ENCODE measurements at regions of chr3 and their contacts with region 1.

Region 1: GRCh38 chr3:184250167-184250828 is 826 bp downstream of the EEF1AKMT4 start:
- DNase-seq: peak; percentile 83
- ATAC-seq: peak; percentile 65
- H3K4me3 ChIP-seq: peak overlapping the region; percentile 97
- H3K27ac ChIP-seq: no peak overlapping the region; the same call in 1 of the 2 replicates
- H3K4me1 ChIP-seq: no peaks in the 10 kb centered on the region; the same call in 1 of the 2 replicates
- H3K27me3 ChIP-seq: no peaks in the 10 kb centered on the region
- CTCF ChIP-seq: peak; percentile 89
- POLR2A ChIP-seq: no peak
- RAD21 ChIP-seq: peak; percentile 74

Region 2: GRCh38 chr3:183455089-183455488 is 795.2 kb before region 1 on chr3:
- CTCF ChIA-PET with region 1: no interaction called
- POLR2A ChIA-PET with region 1: no interaction called
- dilution Hi-C with region 1: no loop called
- in situ Hi-C with region 1: loop called (anchors 25 kb)
- intact Hi-C with region 1: no loop called
- DNase-seq: peak; percentile 57
- ATAC-seq: peak; percentile 60; the same call in 1 of the 2 replicates
- H3K4me3 ChIP-seq: no peak overlapping the region
- H3K27ac ChIP-seq: no peak overlapping the region
- H3K4me1 ChIP-seq: no peaks in the 10 kb centered on the region
- H3K27me3 ChIP-seq: no peaks in the 10 kb centered on the region
- CTCF ChIP-seq: no peak
- POLR2A ChIP-seq: no peak
- RAD21 ChIP-seq: no peak

Region 3: DNA sequence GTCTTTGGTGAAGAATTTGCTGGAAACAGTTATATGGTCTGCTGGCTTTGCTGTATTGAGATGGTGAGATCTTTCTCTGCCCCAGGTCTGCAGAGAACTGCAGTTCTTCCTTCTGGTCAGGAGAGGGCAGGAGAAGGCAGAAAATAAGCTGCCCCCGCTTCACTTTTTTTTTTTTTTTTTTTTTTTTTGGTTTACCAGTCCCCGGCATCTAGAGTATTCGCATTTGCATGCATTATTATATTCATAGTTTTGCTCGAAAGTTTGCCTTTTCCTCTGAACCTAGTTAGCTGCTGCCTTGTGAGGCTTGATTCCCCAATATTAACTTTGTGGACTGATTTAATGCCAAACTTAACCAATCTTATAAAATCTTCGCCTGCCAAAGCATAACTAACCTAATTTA is 355.0 kb before region 1 on chr3:
- CTCF ChIA-PET with region 1: interaction called, 3 read pairs
- POLR2A ChIA-PET with region 1: no interaction called
- dilution Hi-C with region 1: no loop called
- in situ Hi-C with region 1: loop called (anchors 10 kb)
- intact Hi-C with region 1: loop called (anchors 1 kb)
- DNase-seq: peak; percentile 55
- ATAC-seq: peak; percentile 94
- H3K4me3 ChIP-seq: no peak overlapping the region
- H3K27ac ChIP-seq: no peak overlapping the region
- H3K4me1 ChIP-seq: no peaks in the 10 kb centered on the region
- H3K27me3 ChIP-seq: peaks cover 32% of the 10 kb centered on the region
- CTCF ChIP-seq: peak; percentile 92
- POLR2A ChIP-seq: 0 out of 2 replicates have a peak, but pooled peaks have one; percentile 21
- RAD21 ChIP-seq: peak; percentile 92

Region 4: GRCh38 chr3:184017672-184018423 is 232.4 kb before region 1 on chr3 and contains the start of gene ABCC5:
- CTCF ChIA-PET with region 1: no interaction called
- POLR2A ChIA-PET with region 1: interaction called, 9 read pairs
- dilution Hi-C with region 1: no loop called
- in situ Hi-C with region 1: no loop called
- intact Hi-C with region 1: loop called (anchors 10 kb)
- DNase-seq: peak; percentile 91
- ATAC-seq: peak; percentile 99
- H3K4me3 ChIP-seq: peak within 1 kb of the TSS; percentile 57
- H3K27ac ChIP-seq: peak within 1 kb of the TSS; percentile 82
- H3K4me1 ChIP-seq: peaks cover 7% of the 10 kb centered on the region
- H3K27me3 ChIP-seq: 0 out of 2 replicates have a peak, but pooled peaks cover 1% of the 10 kb centered on the region
- CTCF ChIP-seq: no peak
- POLR2A ChIP-seq: 0 out of 2 replicates have a peak, but pooled peaks have one; percentile 24
- RAD21 ChIP-seq: no peak
- total RNA-seq, gene ABCC5: 8.4 and 9.2 TPM in 2 replicates

Region 5: GRCh38 chr3:184117636-184118035 is 132.7 kb before region 1 on chr3:
- CTCF ChIA-PET with region 1: no interaction called
- POLR2A ChIA-PET with region 1: no interaction called
- dilution Hi-C with region 1: no loop called
- in situ Hi-C with region 1: no loop called
- intact Hi-C with region 1: no loop called
- DNase-seq: no peak
- ATAC-seq: no peak
- H3K4me3 ChIP-seq: no peak overlapping the region
- H3K27ac ChIP-seq: no peak overlapping the region
- H3K4me1 ChIP-seq: no peaks in the 10 kb centered on the region
- H3K27me3 ChIP-seq: peaks cover 11% of the 10 kb centered on the region
- CTCF ChIP-seq: no peak
- POLR2A ChIP-seq: no peak
- RAD21 ChIP-seq: no peak

Region 6: GRCh38 chr3:184135149-184135910 is 115.0 kb before region 1 on chr3 and contains the start of gene EIF2B5:
- CTCF ChIA-PET with region 1: no interaction called
- POLR2A ChIA-PET with region 1: no interaction called
- dilution Hi-C with region 1: no loop called
- in situ Hi-C with region 1: no loop called
- intact Hi-C with region 1: loop called (anchors 2 kb)
- DNase-seq: peak; percentile 91
- ATAC-seq: peak; percentile 87
- H3K4me3 ChIP-seq: peak within 1 kb of the TSS; percentile 91
- H3K27ac ChIP-seq: peak within 1 kb of the TSS; percentile 87
- H3K4me1 ChIP-seq: no peaks in the 10 kb centered on the region; the same call in 1 of the 2 replicates
- H3K27me3 ChIP-seq: no peaks in the 10 kb centered on the region
- CTCF ChIP-seq: peak; percentile 47
- POLR2A ChIP-seq: peak; percentile 71
- RAD21 ChIP-seq: peak; percentile 33
- total RNA-seq, gene EIF2B5: 32.5 and 37.6 TPM in 2 replicates

Region 7: GRCh38 chr3:184145111-184145524 is 105.2 kb before region 1 on chr3:
- CTCF ChIA-PET with region 1: no interaction called
- POLR2A ChIA-PET with region 1: no interaction called
- dilution Hi-C with region 1: no loop called
- in situ Hi-C with region 1: no loop called
- intact Hi-C with region 1: loop called (anchors 5 kb)
- DNase-seq: peak; percentile 61
- ATAC-seq: peak; percentile 86
- H3K4me3 ChIP-seq: no peak overlapping the region
- H3K27ac ChIP-seq: no peak overlapping the region; the same call in 1 of the 2 replicates
- H3K4me1 ChIP-seq: 0 out of 2 replicates have a peak, but pooled peaks cover 2% of the 10 kb centered on the region
- H3K27me3 ChIP-seq: no peaks in the 10 kb centered on the region
- CTCF ChIP-seq: peak; percentile 53
- POLR2A ChIP-seq: no peak
- RAD21 ChIP-seq: peak; percentile 63

Region 8: DNA sequence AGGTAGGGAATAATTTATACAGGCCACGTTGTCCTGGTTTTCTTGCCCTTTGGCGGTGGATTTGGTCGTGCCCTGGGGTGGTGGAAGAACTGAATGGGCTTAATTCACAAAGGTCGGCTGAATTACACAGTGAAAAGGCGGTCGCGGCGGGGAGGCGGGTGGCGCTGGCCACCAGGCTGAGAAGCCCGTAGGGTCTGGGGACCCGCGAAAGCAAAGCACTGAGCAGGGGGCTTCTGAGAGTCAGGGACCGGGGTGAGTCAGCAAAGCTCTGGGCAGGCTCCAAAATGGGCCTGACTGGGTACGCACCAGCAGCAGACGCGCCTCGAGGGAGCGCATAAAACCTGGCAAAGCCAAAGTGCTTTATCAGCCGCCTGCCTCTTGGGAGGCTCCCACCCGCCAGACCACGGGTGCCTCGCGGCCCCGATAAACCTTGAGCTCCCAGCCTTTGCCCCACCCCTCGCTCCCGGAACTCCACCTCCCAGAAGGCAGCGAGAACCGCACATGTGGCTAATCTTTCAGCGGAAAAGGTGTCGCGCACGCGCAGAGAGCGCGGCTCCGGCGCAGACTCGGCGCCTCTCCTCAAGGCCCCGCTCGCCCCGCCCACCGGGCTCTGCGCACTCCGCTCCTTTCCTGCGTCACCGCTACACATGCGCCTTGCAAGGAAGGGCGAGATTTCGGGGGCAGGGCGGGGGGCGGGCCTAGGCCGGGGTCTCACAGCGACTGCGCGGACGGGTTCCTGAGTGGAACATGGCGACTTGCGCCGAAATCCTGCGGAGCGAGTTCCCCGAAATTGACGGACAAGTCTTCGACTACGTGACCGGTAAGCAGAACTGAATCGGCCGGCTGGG is 64.6 kb before region 1 on chr3 and contains the start of gene ABCF3:
- CTCF ChIA-PET with region 1: no interaction called
- POLR2A ChIA-PET with region 1: no interaction called
- dilution Hi-C with region 1: no loop called
- in situ Hi-C with region 1: no loop called
- intact Hi-C with region 1: loop called (anchors 2 kb)
- DNase-seq: peak; percentile 98
- ATAC-seq: peak; percentile 99
- H3K4me3 ChIP-seq: peak within 1 kb of the TSS; percentile 67
- H3K27ac ChIP-seq: peak within 1 kb of the TSS; percentile 73
- H3K4me1 ChIP-seq: peaks cover 3% of the 10 kb centered on the region; the same call in 1 of the 2 replicates
- H3K27me3 ChIP-seq: no peaks in the 10 kb centered on the region
- CTCF ChIP-seq: no peak
- POLR2A ChIP-seq: peak; percentile 60; the same call in 1 of the 2 replicates
- RAD21 ChIP-seq: no peak
- total RNA-seq, gene ABCF3: 35.0 and 36.9 TPM in 2 replicates

Measured in IMR-90 (cell line).